Cardiac septum (tissue), 1 donor: ENCODE measurements at regions of chr15 and their contacts with region 1.

Region 1: DNA sequence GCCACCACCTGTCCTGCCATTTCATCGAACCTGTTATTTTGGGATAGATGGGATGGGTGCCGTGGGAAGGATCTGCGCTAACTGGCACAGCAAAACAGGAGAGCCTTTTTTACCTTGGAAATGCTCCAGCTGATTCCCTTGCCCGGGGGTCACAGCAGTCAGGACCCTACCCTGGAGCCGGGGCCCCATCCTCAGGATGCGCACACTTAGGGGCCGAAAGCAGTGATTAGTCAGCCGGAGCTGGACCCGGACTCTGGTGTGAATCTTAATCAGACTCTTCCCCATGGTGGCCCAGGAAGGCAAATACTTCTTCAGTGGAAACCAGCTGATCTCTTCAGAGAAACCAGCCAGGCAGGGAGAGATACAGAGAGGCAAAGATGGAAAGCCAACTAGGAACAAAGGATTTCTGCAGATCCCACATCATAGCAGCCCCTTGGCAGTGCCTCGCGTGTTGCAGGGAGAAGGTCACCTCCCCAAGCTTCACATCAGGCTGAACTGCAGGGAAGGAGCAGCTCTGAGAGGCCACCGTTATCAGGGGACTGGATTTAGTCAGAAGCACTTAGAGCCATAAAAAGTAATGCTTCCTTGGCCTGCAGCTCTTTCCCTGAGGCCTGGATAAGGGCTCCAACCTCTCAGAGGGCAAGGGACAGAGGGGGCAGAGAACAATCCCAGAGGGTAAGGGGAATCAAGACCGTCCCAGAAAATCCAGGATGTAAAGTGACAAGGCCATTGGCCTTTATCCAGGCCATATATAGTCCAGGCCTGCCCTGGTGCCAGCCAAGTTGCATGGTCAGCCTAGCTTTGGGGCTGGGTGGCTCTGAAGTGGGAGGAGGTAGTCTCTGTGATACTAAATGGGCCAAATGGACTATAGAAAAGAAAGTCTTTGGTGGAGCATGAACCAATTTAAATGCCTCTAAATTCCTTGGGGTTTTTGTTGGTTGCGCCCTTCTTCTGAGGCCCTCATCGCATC is 52.9 kb downstream of the WDR76 start:
- DNase-seq: peak; percentile 76

Region 2: GRCh38 chr15:43648649-43649429 is 230.8 kb before region 1 on chr15 and contains the start of gene CATSPER2:
- intact Hi-C with region 1: no loop called
- DNase-seq: no peak
- total RNA-seq, gene CATSPER2: 3.0 TPM

Region 3: DNA sequence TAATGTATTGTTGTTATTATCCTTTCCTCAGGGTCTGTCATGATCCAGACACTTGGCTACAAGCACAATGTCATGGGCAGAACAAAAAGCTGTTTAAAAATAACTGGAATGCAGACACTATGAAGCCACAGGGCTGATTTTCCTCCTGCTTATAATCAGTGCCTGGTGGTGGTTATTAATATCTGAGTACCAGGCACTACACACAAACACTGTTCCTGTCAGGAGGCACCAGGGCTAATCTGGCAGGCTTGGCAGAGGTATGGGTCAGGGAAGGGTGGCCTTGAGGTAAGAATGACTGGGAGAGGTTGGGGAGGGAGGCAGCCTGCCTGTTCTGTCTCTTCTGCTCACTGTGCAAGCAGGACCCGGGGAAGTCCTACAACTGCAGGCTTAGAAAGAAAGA is 14.3 kb after region 1 on chr15:
- intact Hi-C with region 1: loop called (anchors 1 kb)
- DNase-seq: peak; percentile 82

Region 4: GRCh38 chr15:43913026-43913927 is 33.6 kb after region 1 on chr15:
- intact Hi-C with region 1: loop called (anchors 5 kb)
- DNase-seq: peak; percentile 83

Region 5: DNA sequence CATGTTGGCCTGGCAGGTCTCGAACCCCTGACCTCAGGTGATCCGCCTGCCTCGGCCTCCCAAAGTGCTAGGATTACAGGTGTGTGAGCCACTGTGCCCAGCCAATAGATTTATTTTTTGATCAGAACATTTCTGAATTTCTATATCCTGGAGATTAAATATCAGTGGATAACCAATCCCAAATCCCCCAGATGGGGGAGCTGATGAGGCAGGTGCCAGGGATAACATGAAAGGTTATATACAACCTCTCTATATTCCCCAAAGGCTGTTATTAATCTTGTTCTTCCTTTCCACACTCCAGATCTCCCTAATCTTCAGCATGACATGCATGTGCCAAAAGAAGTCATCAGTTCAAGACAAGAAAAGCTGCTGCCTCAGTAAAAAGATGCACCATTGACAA is 59.4 kb after region 1 on chr15:
- intact Hi-C with region 1: no loop called
- DNase-seq: no peak